ENCODE measurements at regions of chr3 and their contacts with region 1.

Region 1: DNA sequence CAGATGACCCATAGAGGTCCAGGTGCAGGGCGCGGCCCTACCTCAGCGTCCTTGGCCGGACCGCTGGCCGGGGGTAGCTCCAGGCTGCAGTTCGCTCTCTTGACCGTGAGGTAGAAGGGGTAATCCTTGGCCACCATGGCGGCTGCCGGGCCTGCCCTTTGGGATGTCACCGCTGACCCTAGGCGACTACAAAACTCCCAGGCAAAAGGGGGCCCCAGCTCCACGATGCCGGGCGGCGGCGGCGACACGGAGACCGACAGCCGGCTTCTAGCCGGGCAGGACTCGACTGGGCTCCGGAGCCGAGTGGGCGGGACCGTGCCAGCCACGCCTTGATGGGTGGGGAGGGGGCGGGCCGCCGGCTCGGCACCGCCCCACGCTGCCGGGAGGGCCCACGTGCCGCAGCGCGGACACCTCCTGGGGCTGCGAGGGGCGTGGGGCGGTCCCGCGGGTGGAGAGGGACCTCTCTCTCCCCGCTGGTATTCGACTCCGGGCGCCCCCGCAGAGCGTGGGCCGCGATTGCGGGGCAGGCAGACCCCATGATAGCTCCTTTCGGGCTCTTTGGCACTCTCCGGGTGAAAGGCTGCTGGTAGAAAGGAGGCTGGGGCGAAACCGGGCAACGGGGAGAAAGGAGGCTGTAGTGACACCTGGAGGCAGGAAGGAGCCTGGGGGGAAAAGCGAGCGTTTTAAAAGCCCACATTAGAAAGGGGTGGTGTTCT is at the start of gene ARHGEF3:
- DNase-seq: peak; percentile 89 to 92 (median 92)
- ATAC-seq: peak; percentile 94 to 98 (median 96)
- H3K4me3 ChIP-seq: peak within 1 kb of the TSS; percentile 54 to 67 (median 62)
- H3K27ac ChIP-seq: peak within 1 kb of the TSS in 2 of 3 donors; percentile 11 to 30
- H3K4me1 ChIP-seq: peaks cover 0 to 10% (median 1%) of the 10 kb centered on the region in 4 donors
- H3K27me3 ChIP-seq: no peaks in the 10 kb centered on the region
- CTCF ChIP-seq: peak; percentile 54 to 61 (median 58)
- POLR2A ChIP-seq: peak; percentile 74
- total RNA-seq, gene ARHGEF3: 1.0 to 2.9 (median 1.6) TPM

Region 2: DNA sequence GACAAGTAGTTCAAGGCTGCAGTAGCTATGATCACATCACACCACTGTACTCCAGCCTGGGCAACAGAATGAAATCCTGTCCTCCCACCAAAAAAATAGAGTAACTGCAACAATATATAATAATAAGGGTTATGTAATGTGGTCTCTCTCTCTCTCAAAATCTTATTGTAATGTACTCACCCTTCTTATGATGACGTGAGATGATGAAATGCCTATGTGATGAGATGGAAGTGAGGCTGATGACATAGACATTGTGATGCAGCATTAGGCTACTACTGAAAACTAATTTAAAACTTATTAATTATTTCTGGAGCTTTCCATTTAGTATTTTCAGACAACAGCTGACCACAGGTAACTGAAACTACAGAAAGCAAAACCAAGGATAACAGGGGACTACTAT is 146.1 kb before region 1 on chr3:
- intact Hi-C with region 1: no loop called
- DNase-seq: no peak
- ATAC-seq: no peak
- H3K4me3 ChIP-seq: no peak overlapping the region
- H3K27ac ChIP-seq: no peak overlapping the region
- H3K4me1 ChIP-seq: no peaks in the 10 kb centered on the region
- H3K27me3 ChIP-seq: no peaks in the 10 kb centered on the region
- CTCF ChIP-seq: no peak
- POLR2A ChIP-seq: no peak

Region 3: GRCh38 chr3:56970461-56970879 is 168.7 kb after region 1 on chr3:
- intact Hi-C with region 1: no loop called
- DNase-seq: no peak
- ATAC-seq: peak in 3 of 4 donors; percentile 23 to 50 (median 26)
- H3K4me3 ChIP-seq: no peak overlapping the region
- H3K27ac ChIP-seq: no peak overlapping the region
- H3K4me1 ChIP-seq: no peaks in the 10 kb centered on the region
- H3K27me3 ChIP-seq: no peaks in the 10 kb centered on the region
- CTCF ChIP-seq: no peak
- POLR2A ChIP-seq: no peak

Region 4: GRCh38 chr3:56988458-56989168 is 186.8 kb after region 1 on chr3:
- intact Hi-C with region 1: loop called (anchors 10 kb)
- DNase-seq: peak; percentile 67 to 76 (median 67)
- ATAC-seq: peak; percentile 87 to 94 (median 91)
- H3K4me3 ChIP-seq: no peak overlapping the region
- H3K27ac ChIP-seq: no peak overlapping the region
- H3K4me1 ChIP-seq: no peaks in the 10 kb centered on the region
- H3K27me3 ChIP-seq: no peaks in the 10 kb centered on the region
- CTCF ChIP-seq: peak; percentile 77 to 83 (median 80)
- POLR2A ChIP-seq: no peak